Activated naive CD4-positive, alpha-beta T cell treated with anti-CD3 and anti-CD28 coated beads for 36 hours (primary cell): ENCODE measurements at regions of chr7 and their contacts with region 1.

Region 1: DNA sequence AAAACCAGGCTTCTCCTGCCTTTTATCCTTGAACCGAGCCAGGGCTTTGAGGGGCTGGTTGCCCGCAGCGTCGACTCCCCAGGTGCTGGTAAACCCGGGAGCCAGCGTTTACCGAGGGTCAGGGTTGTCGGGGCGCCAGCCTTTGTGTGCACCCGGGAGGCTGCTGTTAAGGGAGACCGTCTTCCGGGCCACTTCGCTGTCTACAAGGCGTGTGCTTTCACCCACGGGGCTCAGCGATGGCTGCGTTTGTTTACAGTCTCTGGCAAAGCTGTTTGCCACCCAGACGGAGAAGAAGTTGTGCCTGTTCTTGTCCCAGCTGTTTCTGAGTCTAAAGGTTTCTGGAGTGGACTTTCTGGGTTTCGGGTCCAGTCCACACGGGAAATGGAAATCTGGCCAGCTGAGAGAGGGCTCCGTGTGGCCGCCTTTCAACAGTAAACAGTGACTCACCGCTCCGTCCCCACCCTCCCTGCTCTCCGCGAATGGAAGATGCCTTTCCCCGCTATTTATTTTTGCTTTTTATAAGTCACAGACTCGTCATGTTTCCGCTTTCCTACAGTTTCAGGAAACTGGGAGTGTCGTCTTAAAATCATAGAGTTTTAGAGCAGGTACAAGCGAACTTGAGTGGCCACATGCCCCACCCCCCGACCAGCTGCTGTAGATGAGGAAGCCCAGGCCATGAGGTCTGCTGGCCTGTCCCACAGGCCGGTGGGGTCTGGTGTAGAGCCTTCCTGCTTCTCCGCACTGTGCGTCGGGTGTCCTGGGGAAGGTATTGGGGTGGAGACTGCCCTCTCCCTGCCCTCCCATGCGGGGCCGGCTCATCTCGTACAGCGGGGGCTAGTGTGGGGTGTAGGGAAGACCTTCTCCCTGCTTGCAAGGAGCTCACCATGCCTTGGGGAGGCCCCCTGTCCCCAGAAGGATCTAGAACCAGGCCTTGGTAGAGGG is 2.3 kb downstream of the MAFK start:
- DNase-seq: peak; percentile 80
- H3K4me3 Mint-ChIP-seq: peak overlapping the region; percentile 88
- H3K27ac Mint-ChIP-seq: peak overlapping the region; percentile 89
- H3K4me1 Mint-ChIP-seq: peaks cover 19% of the 10 kb centered on the region
- H3K27me3 Mint-ChIP-seq: no peaks in the 10 kb centered on the region

Region 2: DNA sequence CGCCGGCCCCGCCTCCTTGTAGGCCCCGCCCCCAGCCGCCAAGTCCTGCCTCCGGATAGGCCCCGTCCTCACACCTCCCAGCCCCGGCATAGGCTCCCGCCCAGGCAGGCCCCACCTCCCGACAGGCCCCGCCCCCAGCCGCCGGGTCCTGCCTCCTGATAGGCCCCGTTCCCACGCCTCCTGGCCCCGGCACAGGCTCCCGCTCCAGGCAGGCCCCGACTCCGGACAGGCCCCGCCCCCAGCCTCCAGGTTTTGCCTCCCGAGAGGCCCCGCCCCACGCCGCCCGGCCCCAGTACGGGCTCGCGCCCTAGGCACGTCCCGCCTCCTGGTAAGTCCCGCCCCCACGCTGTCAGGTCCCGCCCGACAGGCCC is 73.2 kb before region 1 on chr7:
- CTCF ChIA-PET with region 1: no interaction called
- intact Hi-C with region 1: loop called (anchors 1 kb)
- DNase-seq: peak; percentile 98
- H3K4me3 Mint-ChIP-seq: no peak overlapping the region
- H3K27ac Mint-ChIP-seq: no peak overlapping the region
- H3K4me1 Mint-ChIP-seq: peaks cover 19% of the 10 kb centered on the region
- H3K27me3 Mint-ChIP-seq: no peaks in the 10 kb centered on the region

Region 3: DNA sequence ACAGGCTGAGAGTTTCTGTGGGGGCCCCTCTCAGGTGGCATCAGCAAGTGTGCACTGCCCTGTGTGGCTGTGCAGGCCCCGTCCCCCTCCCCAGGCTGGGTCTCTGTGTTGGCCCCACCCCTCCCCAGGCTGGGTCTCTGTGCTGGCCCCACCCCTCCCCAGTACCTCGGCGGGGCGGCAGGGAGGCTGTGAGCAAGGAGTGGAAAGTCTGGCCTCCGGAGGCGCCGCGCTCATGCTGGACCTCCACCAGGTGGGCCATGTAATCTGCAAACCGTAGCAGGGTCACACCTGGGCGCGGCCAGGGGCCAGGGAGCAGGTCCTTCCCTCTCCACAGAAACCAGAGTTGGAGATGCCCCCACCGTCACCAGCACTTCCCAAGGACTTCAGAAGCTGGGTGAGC is 52.1 kb before region 1 on chr7:
- CTCF ChIA-PET with region 1: no interaction called
- intact Hi-C with region 1: no loop called
- DNase-seq: no peak
- H3K4me3 Mint-ChIP-seq: no peak overlapping the region
- H3K27ac Mint-ChIP-seq: no peak overlapping the region
- H3K4me1 Mint-ChIP-seq: no peaks in the 10 kb centered on the region
- H3K27me3 Mint-ChIP-seq: no peaks in the 10 kb centered on the region

Region 4: DNA sequence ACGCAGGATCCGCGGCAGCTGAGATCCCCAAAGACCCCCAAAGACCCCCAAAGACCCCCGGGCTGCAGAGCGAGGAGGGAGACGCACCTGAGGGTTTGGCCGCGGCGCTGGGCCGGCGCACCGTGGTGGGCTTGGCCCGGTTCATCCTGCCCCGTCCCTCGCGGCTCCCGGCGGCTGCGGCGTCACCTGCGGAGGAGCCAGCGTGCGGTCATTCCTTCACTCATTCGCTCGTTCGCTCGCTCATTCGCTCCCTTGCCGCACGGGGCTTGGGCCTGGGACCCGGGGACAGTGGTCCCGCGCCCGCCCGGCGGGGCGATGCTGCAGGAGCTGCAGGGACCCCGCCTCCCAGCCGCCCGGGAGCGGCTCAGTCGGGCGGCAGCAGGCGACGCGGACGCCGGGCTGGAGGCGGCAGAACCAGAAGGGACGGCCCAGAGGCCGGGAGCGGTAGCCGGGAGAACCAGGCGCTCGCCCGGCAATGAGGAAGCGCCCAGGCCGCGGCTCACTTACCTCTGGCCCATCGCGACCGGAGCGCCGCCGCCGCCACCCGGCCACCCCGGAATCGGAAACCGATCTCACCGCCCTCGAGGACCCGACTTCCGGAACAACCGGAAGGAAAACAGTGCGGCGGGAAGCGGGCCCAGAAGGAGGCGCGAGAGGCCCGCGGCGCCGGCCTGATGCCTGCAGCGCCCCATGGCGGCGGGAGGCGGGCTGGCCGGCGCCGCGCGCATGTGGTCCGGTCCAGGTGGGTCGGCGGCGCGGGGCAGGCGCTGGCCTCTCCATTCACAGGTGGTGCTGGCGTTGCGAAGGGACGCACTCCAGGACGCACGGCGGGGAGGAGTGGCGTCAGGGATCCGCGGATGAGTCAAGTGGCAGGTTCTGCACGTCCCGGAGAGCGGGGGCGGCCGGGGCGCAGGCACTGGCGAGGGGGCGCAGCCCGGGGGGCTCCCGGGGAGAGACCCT is 28.7 kb before region 1 on chr7 and contains the start of gene INTS1:
- CTCF ChIA-PET with region 1: interaction called, 6 read pairs
- intact Hi-C with region 1: loop called (anchors 1 kb)
- DNase-seq: peak; percentile 92
- H3K4me3 Mint-ChIP-seq: peak within 1 kb of the TSS; percentile 93
- H3K27ac Mint-ChIP-seq: peak within 1 kb of the TSS; percentile 76
- H3K4me1 Mint-ChIP-seq: peaks cover 41% of the 10 kb centered on the region
- H3K27me3 Mint-ChIP-seq: no peaks in the 10 kb centered on the region
- total RNA-seq, gene INTS1: 97.6 to 103 TPM

Region 5: DNA sequence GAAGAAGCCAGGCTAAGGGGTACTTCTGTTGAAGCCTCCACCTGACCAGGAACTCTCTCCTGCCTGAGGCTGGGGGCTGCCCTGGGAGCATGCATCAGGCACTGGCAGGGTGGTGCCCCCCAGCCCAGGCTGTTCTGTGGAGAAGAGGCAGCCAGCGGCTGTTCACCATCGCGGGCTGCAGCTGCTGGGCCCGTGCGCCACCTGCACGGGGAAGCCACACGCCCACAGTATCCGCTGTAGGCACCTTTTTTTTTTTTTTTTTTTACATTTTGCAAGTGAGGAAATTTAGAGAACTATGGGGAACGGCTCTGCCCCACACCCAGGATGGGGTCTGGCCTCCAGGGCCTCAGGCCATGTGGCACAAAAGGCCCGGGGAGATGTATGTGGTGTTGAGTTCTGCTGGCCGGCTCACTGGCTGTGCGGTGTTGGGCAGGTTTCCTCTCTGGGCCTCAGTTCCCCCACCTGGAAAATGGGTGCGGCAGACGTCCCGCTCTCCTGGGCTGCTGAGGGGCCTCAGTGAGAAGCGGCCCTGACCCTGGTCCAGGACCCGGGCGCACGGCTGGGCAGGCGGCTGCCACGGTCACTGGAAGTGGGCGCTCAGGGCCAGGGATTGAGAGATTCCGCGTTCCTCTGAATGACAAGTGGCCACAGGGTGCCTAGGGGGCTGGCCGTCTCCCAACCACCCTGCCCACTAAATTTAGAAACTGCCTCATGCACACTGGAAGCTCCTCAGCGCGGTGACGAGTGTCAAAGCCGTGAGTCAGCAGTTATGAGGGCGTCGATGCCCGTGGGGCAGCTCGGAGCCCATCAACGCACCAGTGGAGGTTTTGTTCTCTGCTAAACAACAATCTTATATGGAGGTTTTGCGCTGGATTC is 19.7 kb before region 1 on chr7:
- CTCF ChIA-PET with region 1: interaction called, 5 read pairs
- intact Hi-C with region 1: loop called (anchors 2 kb)
- DNase-seq: peak; percentile 64
- H3K4me3 Mint-ChIP-seq: no peak overlapping the region
- H3K27ac Mint-ChIP-seq: peak overlapping the region; percentile 46
- H3K4me1 Mint-ChIP-seq: peaks cover 30% of the 10 kb centered on the region
- H3K27me3 Mint-ChIP-seq: no peaks in the 10 kb centered on the region

Region 6: GRCh38 chr7:1555809-1556540 is 23.2 kb after region 1 on chr7 and contains the start of gene TMEM184A:
- CTCF ChIA-PET with region 1: no interaction called
- intact Hi-C with region 1: loop called (anchors 2 kb)
- DNase-seq: peak; percentile 72
- H3K4me3 Mint-ChIP-seq: no peak within 1 kb of the TSS
- H3K27ac Mint-ChIP-seq: no peak within 1 kb of the TSS
- H3K4me1 Mint-ChIP-seq: peaks cover 3% of the 10 kb centered on the region
- H3K27me3 Mint-ChIP-seq: no peaks in the 10 kb centered on the region
- total RNA-seq, gene TMEM184A: 0.36 TPM in 1 of 2 experiments, not detected in the other

Region 7: GRCh38 chr7:1569833-1570633 is 37.3 kb after region 1 on chr7 and contains the start of gene PSMG3:
- CTCF ChIA-PET with region 1: no interaction called
- intact Hi-C with region 1: loop called (anchors 2 kb)
- DNase-seq: peak; percentile 91
- H3K4me3 Mint-ChIP-seq: peak within 1 kb of the TSS; percentile 87
- H3K27ac Mint-ChIP-seq: peak within 1 kb of the TSS; percentile 87
- H3K4me1 Mint-ChIP-seq: peaks cover 37% of the 10 kb centered on the region
- H3K27me3 Mint-ChIP-seq: no peaks in the 10 kb centered on the region
- total RNA-seq, gene PSMG3: 29.8 to 33.9 TPM